GM13976 (cell line): ENCODE measurements at regions of chr15 and their contacts with region 1.

Region 1: GRCh38 chr15:63600616-63601025 is 3.4 kb downstream of the FBXL22 start:
- DNase-seq: peak; percentile 92
- CTCF ChIP-seq: peak; percentile 41

Region 2: GRCh38 chr15:63277038-63277892 is 323.4 kb before region 1 on chr15 and contains the start of gene APH1B:
- in situ Hi-C with region 1: loop called (anchors 25 kb)
- DNase-seq: peak; percentile 88
- CTCF ChIP-seq: no peak

Region 3: DNA sequence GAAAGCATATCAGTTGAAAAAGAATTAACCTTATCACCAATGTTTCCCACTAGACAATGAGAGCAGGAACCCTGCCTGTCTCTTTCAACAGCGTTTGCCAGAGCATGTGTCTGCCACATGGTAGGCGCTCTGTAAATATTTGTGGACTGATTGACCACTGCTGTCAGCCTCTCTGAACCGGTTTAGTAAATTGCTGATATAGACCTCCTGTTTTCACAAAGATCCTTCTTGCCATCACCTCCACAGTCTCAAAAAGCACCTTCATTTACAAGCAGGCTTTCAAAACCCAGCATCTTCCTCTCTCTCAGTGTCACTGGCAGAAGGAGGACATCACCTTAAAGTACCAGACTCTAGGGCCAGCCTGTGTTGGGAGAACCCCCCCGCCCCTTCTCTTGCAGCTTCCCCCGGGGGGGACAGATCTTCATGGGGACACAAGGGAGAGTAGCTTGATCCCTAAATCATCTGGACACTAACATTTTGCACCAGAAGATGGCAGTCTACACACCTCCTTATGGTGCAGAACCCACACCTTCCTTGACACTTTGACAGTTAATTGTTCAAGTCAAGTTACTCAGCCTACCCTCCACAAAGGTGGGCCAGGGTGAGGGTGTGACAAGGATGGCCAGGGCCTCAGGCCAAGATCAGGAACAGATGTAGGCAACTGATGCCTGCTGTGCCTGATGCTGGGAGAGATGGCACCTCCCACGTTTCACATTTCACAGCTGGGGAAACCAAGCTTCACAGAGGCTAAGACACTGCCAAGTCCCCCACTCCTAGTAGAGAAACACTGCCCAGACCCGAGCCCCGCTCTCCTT is 134.0 kb before region 1 on chr15:
- in situ Hi-C with region 1: loop called (anchors 5 kb)
- DNase-seq: peak; percentile 83
- CTCF ChIP-seq: peak; percentile 61

Region 4: DNA sequence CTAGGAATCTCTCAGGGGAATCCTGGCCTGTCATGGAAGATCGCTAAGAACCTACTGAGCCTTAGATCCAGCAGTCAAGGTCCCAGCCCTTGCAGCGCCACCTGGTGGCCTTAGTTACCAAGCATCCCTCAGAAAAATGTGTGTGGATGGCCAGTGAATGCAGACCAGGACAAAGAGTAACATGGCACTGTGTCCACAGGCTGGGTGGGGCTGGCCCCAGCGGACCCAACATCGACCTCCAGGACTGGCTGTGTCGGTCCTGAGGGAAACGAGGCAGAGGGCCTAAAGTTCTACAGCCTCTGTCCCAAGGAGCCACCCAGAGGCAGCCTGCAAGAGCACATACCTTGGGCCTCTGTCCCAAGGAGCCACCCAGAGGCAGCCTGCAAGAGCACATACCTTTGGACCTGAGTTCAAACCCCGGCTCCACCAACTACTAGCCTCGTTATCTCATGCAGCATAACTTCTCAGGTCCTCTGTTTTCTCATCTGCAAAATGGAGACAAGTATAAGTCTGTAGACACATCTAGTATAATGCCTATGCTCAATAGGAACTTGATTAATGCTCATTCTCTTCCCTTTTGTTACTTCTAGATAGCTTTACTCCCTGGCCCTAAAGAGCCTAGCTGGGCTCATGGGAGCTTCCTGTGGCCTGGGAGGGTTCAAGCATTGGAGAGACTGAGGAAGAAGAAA is 290.6 kb after region 1 on chr15:
- in situ Hi-C with region 1: loop called (anchors 25 kb)
- DNase-seq: peak; percentile 67
- CTCF ChIP-seq: peak; percentile 62